Activated CD8-positive, alpha-beta memory T cell treated with anti-CD3 and anti-CD28 coated beads, Interleukin-2, amount 10 ng/mL, durations not matched to agents 7 days and 5 days (primary cell): ENCODE measurements at regions of chr11 and their contacts with region 1.

Region 1: DNA sequence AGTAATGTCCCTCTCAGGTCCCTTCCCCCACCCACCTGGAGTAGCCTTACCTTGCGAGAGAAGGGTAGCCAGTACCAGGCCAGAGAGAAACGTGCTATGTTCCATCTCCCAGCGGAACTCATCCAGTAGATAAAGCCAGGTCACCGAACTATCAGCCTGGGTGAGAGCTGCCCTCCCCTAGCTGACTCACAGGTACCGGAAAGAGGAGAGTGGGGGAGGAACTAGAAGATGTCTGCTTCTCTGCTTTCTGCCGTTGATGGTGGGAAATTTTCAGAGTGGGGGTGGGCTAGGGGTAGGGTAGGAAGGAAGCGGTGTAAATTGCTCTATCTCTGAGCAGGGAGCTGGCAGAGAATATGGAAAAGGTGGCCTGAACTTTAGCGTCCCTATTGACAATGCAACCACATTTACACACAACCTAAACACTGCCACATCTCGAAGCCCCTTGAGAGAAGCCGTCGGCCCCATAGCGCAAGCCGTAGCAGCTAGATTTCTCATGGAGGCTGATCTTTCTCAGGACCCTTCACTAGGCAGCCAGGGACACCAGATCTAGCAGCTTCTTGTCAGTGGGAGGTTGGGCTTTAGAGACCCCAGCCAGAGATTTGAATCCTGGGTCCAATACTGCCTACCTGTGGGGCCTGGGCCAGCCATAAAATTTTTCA is at the start of gene CD3D:
- DNase-seq: peak; percentile 84
- ATAC-seq: peak; percentile 47
- H3K4me3 Mint-ChIP-seq: peak within 1 kb of the TSS; percentile 87
- H3K27ac Mint-ChIP-seq: peak within 1 kb of the TSS; percentile 97
- H3K4me1 Mint-ChIP-seq: peaks cover 68% of the 10 kb centered on the region
- H3K27me3 Mint-ChIP-seq: no peaks in the 10 kb centered on the region
- total RNA-seq, gene CD3D: 428 to 526 TPM

Region 2: GRCh38 chr11:118353084-118353710 is 10.6 kb after region 1 on chr11:
- CTCF ChIA-PET with region 1: interaction called, 10 read pairs
- DNase-seq: no peak
- ATAC-seq: peak; percentile 20
- H3K4me3 Mint-ChIP-seq: no peak overlapping the region
- H3K27ac Mint-ChIP-seq: peak overlapping the region; percentile 66
- H3K4me1 Mint-ChIP-seq: peaks cover 30% of the 10 kb centered on the region
- H3K27me3 Mint-ChIP-seq: no peaks in the 10 kb centered on the region

Region 3: DNA sequence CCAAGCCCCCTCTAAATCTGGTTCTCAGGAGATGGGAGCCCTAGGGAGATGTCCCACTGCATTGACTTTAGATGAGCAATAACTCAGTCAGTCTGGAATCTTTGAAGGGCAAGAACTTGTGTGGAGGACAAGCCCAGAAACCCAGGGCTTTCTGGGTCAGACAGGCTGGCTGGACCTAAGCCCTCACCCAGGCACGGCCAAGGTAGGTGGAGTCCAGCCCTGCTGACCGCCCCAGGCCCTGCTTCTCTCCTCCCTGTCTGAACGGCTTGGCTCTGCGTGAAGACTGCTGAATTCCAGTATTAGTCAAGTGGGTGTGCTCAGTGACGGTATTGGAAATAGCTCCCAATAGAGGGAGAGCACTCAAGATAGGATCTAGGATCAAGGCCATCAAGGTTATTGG is 547.1 kb after region 1 on chr11:
- CTCF ChIA-PET with region 1: no interaction called
- DNase-seq: no peak
- ATAC-seq: no peak
- H3K4me3 Mint-ChIP-seq: no peak overlapping the region
- H3K27ac Mint-ChIP-seq: no peak overlapping the region
- H3K4me1 Mint-ChIP-seq: peaks cover 34% of the 10 kb centered on the region
- H3K27me3 Mint-ChIP-seq: peaks cover 4% of the 10 kb centered on the region